ENCODE measurements at regions of chr3 and their contacts with region 1.

Region 1: DNA sequence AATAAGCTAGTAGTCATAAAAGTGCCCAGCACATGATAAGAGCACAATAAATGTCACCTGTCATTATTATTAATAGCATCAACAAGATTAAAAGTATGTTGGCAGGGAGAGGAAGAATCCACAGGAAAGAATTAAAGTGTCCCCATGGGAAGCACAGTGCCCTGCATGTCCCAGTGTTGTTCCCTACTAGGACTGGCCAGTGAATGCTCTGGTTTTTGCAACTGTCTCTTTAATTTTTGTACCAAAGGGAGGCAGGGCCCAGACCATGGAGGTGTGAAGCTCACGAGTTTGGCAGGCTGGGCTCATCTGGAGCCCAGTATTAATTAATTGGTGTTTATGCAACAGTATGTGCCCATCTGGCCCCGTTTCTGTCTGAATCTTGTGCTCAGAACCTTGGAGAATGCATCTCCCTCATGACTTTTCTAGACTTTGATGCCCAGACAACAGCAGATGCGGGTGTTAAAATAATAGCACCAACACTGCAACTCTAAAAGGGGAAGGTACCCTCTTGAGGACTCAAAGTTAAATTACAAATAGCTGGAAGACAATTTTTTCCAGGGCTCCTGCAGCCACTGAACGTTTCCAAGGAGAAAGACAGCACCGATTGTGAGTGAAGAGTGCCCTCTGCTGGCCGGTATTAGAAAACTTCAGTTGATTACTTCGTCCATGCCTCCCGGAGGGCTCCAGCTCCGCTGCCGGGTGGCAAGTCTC is 71.9 kb upstream of the SPATA12 start:
- DNase-seq: peak; percentile 69
- H3K4me3 ChIP-seq: no peak overlapping the region
- H3K27ac ChIP-seq: no peak overlapping the region
- H3K4me1 ChIP-seq: no peaks in the 10 kb centered on the region
- H3K27me3 ChIP-seq: no peaks in the 10 kb centered on the region
- CTCF ChIP-seq: peak; percentile 59

Region 2: GRCh38 chr3:56125358-56126005 is 863.1 kb before region 1 on chr3:
- CTCF ChIA-PET with region 1: no interaction called
- POLR2A ChIA-PET with region 1: no interaction called
- intact Hi-C with region 1: no loop called
- DNase-seq: peak; percentile 53
- H3K4me3 ChIP-seq: no peak overlapping the region
- H3K27ac ChIP-seq: no peak overlapping the region
- H3K4me1 ChIP-seq: peaks cover 6% of the 10 kb centered on the region
- H3K27me3 ChIP-seq: no peaks in the 10 kb centered on the region
- CTCF ChIP-seq: no peak

Region 3: DNA sequence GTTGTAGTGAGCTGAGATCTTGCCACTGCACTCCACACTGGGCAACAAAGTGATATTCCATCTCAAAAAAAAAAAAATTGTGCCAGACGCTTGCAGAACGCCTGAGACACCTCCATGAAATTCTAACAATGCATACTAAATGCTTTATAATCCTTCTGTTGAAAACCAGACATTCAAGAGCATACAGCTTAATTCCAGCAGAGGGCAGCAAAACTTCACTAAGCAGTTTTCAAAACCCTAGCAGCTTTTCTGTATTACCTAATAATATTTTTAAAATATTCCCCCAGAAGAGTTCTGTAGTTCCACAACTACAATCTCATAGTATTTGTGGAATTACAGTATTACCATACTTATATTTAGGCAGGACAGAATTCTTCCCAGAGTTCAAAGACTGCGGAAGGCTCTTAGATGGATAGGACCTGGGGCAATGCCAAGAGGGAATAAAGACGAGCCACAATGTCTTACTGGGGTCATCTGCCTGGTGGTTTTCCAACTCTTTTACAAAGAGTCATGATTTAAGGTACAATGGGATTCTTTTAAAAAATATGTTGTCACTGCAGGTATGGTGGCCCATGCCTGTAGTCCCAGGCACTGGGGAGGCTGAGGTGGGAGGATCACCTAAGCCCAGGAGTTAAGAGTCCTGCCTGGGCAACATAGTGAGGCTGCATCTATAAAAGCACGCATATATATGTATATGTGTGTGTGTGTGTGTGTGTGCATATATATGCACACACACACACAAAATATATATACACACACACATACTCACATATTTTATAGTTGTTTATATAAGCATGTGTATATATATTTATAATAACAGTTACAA is 285.9 kb before region 1 on chr3:
- CTCF ChIA-PET with region 1: interaction called, 23 read pairs
- POLR2A ChIA-PET with region 1: no interaction called
- intact Hi-C with region 1: loop called (anchors 1 kb)
- DNase-seq: peak; percentile 48
- H3K4me3 ChIP-seq: no peak overlapping the region
- H3K27ac ChIP-seq: no peak overlapping the region
- H3K4me1 ChIP-seq: no peaks in the 10 kb centered on the region
- H3K27me3 ChIP-seq: no peaks in the 10 kb centered on the region
- CTCF ChIP-seq: peak; percentile 63

Region 4: DNA sequence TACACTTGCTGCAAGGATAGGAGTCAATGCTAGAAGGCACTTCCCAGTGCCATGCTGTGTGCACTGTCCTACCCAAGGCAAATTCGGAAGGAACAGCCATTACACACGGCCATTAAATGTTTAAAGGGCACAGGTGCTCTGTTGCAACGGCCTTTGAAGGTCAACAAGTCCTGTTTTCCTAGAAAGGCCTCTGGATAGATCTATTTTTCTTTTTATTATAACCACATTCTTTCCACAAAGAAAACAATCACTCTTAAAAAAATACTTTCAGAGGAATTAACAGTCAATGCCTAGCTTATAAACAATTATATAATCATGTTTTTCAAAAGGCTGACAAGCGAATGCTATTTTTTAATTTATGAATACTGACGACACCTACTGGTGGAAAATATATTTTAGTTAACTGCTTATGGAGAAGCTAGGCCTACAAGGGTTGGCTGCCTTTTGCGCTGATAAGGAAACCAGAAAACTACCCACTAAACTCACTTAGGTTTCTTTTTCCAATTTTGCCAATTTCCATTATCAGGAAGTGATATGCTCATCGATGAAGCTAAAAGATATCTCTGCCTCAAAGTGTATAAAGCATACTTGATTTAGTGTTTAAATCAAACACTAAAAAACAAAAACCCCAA is 189.2 kb before region 1 on chr3:
- CTCF ChIA-PET with region 1: interaction called, 4 read pairs
- POLR2A ChIA-PET with region 1: interaction called, 3 read pairs
- intact Hi-C with region 1: loop called (anchors 10 kb)
- DNase-seq: peak; percentile 51
- H3K4me3 ChIP-seq: no peak overlapping the region
- H3K27ac ChIP-seq: no peak overlapping the region
- H3K4me1 ChIP-seq: no peaks in the 10 kb centered on the region
- H3K27me3 ChIP-seq: no peaks in the 10 kb centered on the region
- CTCF ChIP-seq: peak; percentile 53

Region 5: GRCh38 chr3:56939834-56940233 is 48.8 kb before region 1 on chr3:
- CTCF ChIA-PET with region 1: interaction called, 11 read pairs
- POLR2A ChIA-PET with region 1: no interaction called
- intact Hi-C with region 1: no loop called
- DNase-seq: no peak
- H3K4me3 ChIP-seq: no peak overlapping the region
- H3K27ac ChIP-seq: no peak overlapping the region
- H3K4me1 ChIP-seq: no peaks in the 10 kb centered on the region
- H3K27me3 ChIP-seq: no peaks in the 10 kb centered on the region
- CTCF ChIP-seq: no peak

Region 6: DNA sequence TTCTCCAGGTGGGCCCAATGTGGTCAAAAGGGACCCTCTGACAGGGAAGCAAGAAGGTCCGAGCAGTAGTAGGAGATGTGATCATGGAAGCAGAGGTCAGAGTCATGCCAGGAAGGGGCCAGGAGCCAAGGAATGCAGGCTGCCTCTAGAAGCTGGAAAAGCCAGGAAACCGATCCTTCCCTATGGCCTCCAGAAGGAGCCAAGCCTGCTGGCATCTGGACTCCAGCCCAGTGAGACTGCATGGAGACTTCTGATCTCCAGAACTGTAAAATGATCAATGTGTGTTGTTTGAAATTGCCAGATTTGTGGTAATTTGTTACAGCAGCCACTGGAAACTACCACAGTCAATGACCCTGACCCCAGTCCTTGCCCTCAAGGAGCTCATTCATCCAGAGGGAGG is 15.1 kb after region 1 on chr3:
- CTCF ChIA-PET with region 1: interaction called, 10 read pairs
- POLR2A ChIA-PET with region 1: no interaction called
- intact Hi-C with region 1: no loop called
- DNase-seq: no peak
- H3K4me3 ChIP-seq: no peak overlapping the region
- H3K27ac ChIP-seq: no peak overlapping the region
- H3K4me1 ChIP-seq: no peaks in the 10 kb centered on the region
- H3K27me3 ChIP-seq: no peaks in the 10 kb centered on the region
- CTCF ChIP-seq: no peak

Region 7: GRCh38 chr3:57017459-57017845 is 28.8 kb after region 1 on chr3:
- CTCF ChIA-PET with region 1: no interaction called
- POLR2A ChIA-PET with region 1: no interaction called
- intact Hi-C with region 1: no loop called
- DNase-seq: no peak
- H3K4me3 ChIP-seq: no peak overlapping the region
- H3K27ac ChIP-seq: no peak overlapping the region
- H3K4me1 ChIP-seq: no peaks in the 10 kb centered on the region
- H3K27me3 ChIP-seq: no peaks in the 10 kb centered on the region
- CTCF ChIP-seq: no peak